ENCODE measurements at regions of chr19 and their contacts with region 1.

Region 1: DNA sequence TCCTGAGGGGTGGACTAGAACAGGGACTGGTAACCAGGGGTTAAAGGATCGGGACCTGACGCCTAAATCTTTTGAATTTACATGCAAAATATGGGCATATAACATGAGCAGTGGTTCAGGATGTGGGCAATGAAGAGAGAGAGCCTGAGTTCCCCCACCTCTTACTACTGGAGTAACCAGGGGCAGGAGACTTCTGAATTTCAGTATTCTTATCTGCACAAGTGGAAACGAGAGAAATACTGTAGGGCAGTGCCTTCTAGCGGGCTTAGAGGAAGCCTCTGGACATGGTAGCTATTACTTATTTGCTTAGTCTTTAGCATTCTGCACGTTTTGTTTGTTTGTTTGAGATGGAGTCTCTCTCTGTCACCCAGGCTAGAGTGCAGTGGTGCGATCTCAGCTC is 26.3 kb downstream of the BCAT2 start:
- DNase-seq: no peak
- H3K4me3 ChIP-seq: no peak overlapping the region
- H3K27ac ChIP-seq: no peak overlapping the region
- H3K4me1 ChIP-seq: peaks cover 0 to 12% (median 4%) of the 10 kb centered on the region in 4 donors
- H3K27me3 ChIP-seq: no peaks in the 10 kb centered on the region
- CTCF ChIP-seq: no peak

Region 2: GRCh38 chr19:48842789-48843162 is 58.2 kb after region 1 on chr19:
- intact Hi-C with region 1: loop called (anchors 2 kb)
- DNase-seq: peak in 1 of 2 donors; percentile 44
- H3K4me3 ChIP-seq: no peak overlapping the region
- H3K27ac ChIP-seq: no peak overlapping the region
- H3K4me1 ChIP-seq: no peaks in the 10 kb centered on the region
- H3K27me3 ChIP-seq: no peaks in the 10 kb centered on the region
- CTCF ChIP-seq: peak; percentile 80 to 84

Measured in tibial artery (tissue), 4 donors.